ENCODE measurements at regions of chr22 and their contacts with region 1.

Region 1: GRCh38 chr22:45101515-45102227 is 62.1 kb upstream of the NUP50 start:
- DNase-seq: peak; percentile 67
- ATAC-seq: peak; percentile 84
- H3K4me3 ChIP-seq: no peak overlapping the region
- H3K27ac ChIP-seq: no peak overlapping the region
- H3K4me1 ChIP-seq: peaks cover 11% of the 10 kb centered on the region; the same call in 1 of the 2 replicates
- H3K27me3 ChIP-seq: peaks cover 2 to 35% of the 10 kb centered on the region in 2 experiments; a peak in 4 of 5 replicates
- CTCF ChIP-seq: peak; percentile 88
- EP300 ChIP-seq: no peak
- POLR2A ChIP-seq: no peak
- RAD21 ChIP-seq: peak; percentile 76

Region 2: GRCh38 chr22:45192701-45193187 is 91.1 kb after region 1 on chr22:
- CTCF ChIA-PET with region 1: no interaction called
- POLR2A ChIA-PET with region 1: no interaction called
- in situ Hi-C with region 1: no loop called
- intact Hi-C with region 1: loop called (anchors 10 kb)
- DNase-seq: peak; percentile 63
- ATAC-seq: peak; percentile 75
- H3K4me3 ChIP-seq: no peak overlapping the region
- H3K27ac ChIP-seq: no peak overlapping the region
- H3K4me1 ChIP-seq: peaks cover 31% of the 10 kb centered on the region
- H3K27me3 ChIP-seq: no peaks in the 10 kb centered on the region
- CTCF ChIP-seq: peak; percentile 48
- EP300 ChIP-seq: no peak
- POLR2A ChIP-seq: no peak
- RAD21 ChIP-seq: peak; percentile 19; the same call in 1 of the 2 replicates

Measured in HepG2 (cell line).